ENCODE measurements at regions of chr11 and their contacts with region 1.

Region 1: DNA sequence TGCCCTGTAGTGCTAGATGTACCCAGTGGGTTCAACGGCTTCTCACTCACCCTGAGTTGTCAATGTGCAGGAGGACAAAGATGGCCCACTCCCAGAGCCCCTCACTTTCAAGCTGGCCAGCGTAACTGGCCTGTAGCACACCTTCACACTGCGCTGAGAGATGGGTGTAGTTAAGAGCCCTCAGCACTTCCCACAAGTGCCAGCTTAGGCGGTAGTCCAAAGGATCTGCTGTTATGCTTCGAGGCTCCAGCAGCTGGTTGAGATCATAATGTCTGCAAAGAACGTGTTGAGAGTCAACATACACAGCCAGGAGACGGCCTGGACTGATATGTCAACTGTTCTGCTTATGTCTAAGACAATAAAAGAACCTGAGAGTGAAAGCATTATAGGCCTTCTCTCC is 14.7 kb upstream of the CHRNA10 start:
- DNase-seq: no peak
- ATAC-seq: 0 out of 2 replicates have a peak, but pooled peaks have one; percentile 27
- H3K4me3 ChIP-seq: no peak overlapping the region
- H3K27ac ChIP-seq: no peak overlapping the region
- H3K4me1 ChIP-seq: no peaks in the 10 kb centered on the region
- H3K27me3 ChIP-seq: no peaks in the 10 kb centered on the region
- CTCF ChIP-seq: no peak

Region 2: DNA sequence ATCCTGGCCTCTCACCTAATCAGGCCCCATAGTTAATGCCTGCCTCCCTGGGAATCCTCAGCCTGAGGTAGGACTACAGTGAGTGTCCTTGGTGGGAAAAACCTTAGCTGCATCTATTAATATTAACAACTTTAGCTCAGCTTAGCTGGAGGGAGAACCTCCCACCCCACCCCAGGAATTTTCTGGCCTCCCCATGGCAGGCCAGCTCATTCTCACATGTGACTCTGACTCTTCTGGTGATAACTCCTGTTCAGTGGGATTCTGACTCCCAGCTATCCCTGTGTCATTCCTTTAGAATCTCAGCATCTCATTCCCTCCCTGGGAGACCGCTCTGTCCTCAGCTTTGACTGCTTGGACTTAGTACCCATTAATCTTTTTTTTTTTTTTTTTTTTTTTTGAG is 58.6 kb before region 1 on chr11:
- CTCF ChIA-PET with region 1: no interaction called
- POLR2A ChIA-PET with region 1: interaction called, 6 read pairs
- in situ Hi-C with region 1: loop called (anchors 5 kb)
- intact Hi-C with region 1: no loop called
- DNase-seq: no peak
- ATAC-seq: peak; percentile 39; the same call in 1 of the 2 replicates
- H3K4me3 ChIP-seq: no peak overlapping the region
- H3K27ac ChIP-seq: no peak overlapping the region
- H3K4me1 ChIP-seq: no peaks in the 10 kb centered on the region
- H3K27me3 ChIP-seq: no peaks in the 10 kb centered on the region
- CTCF ChIP-seq: no peak

Region 3: GRCh38 chr11:3671334-3672254 is 14.3 kb before region 1 on chr11 and contains the start of gene CHRNA10:
- CTCF ChIA-PET with region 1: no interaction called
- POLR2A ChIA-PET with region 1: no interaction called
- in situ Hi-C with region 1: no loop called
- intact Hi-C with region 1: no loop called
- DNase-seq: no peak
- ATAC-seq: no peak
- H3K4me3 ChIP-seq: no peak within 1 kb of the TSS
- H3K27ac ChIP-seq: no peak within 1 kb of the TSS
- H3K4me1 ChIP-seq: no peaks in the 10 kb centered on the region
- H3K27me3 ChIP-seq: no peaks in the 10 kb centered on the region
- CTCF ChIP-seq: no peak
- total RNA-seq, gene CHRNA10: 6.8 TPM

Region 4: DNA sequence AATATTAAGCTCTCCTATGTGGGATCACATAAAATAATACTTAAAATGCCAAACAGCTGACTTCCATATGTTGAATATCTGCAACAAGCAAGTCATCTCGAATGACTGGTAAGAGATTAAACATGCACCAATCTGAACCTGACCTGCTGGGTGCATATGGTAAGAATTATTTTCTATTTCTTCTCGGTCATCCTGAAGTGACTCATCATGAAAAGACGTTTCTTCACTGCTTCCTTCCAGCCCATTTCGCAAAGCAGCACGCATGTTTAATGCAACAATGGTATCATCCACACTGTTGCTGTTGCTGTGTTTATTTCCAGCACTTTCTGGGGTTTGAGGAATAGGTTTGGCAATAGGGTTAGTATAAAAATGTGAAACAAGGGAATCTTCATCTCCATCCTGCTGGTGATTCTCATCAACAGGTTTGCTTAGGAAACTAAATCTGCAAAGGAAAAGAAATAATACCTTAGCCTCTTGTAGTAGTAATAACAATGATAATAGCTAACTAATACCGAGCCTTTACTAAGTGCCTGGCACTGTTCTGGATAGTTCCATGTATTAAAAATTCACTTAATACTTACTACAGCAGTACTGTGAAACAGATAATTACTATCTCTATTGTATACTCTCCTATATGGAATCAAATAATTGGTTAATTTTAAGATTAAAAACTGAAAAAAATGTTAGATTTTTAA is 37.2 kb after region 1 on chr11:
- CTCF ChIA-PET with region 1: no interaction called
- POLR2A ChIA-PET with region 1: no interaction called
- in situ Hi-C with region 1: loop called (anchors 5 kb)
- intact Hi-C with region 1: no loop called
- DNase-seq: peak; percentile 5
- ATAC-seq: no peak
- H3K4me3 ChIP-seq: no peak overlapping the region
- H3K27ac ChIP-seq: no peak overlapping the region
- H3K4me1 ChIP-seq: no peaks in the 10 kb centered on the region
- H3K27me3 ChIP-seq: no peaks in the 10 kb centered on the region
- CTCF ChIP-seq: no peak

Region 5: GRCh38 chr11:3995949-3996554 is 310.1 kb after region 1 on chr11:
- CTCF ChIA-PET with region 1: no interaction called
- POLR2A ChIA-PET with region 1: no interaction called
- in situ Hi-C with region 1: no loop called
- intact Hi-C with region 1: no loop called
- DNase-seq: no peak
- ATAC-seq: peak; percentile 45; the same call in 1 of the 2 replicates
- H3K4me3 ChIP-seq: no peak overlapping the region
- H3K27ac ChIP-seq: no peak overlapping the region
- H3K4me1 ChIP-seq: no peaks in the 10 kb centered on the region
- H3K27me3 ChIP-seq: no peaks in the 10 kb centered on the region
- CTCF ChIP-seq: no peak

Region 6: GRCh38 chr11:4102711-4103110 is 416.8 kb after region 1 on chr11:
- CTCF ChIA-PET with region 1: no interaction called
- POLR2A ChIA-PET with region 1: no interaction called
- in situ Hi-C with region 1: loop called (anchors 10 kb)
- intact Hi-C with region 1: no loop called
- DNase-seq: no peak
- ATAC-seq: no peak
- H3K4me3 ChIP-seq: no peak overlapping the region
- H3K27ac ChIP-seq: no peak overlapping the region
- H3K4me1 ChIP-seq: no peaks in the 10 kb centered on the region; the same call in 1 of the 2 replicates
- H3K27me3 ChIP-seq: no peaks in the 10 kb centered on the region
- CTCF ChIP-seq: no peak

Measured in Panc1 (cell line).